CD4-positive, alpha-beta T cell (primary cell): ENCODE measurements at regions of chr15 and their contacts with region 1.

Region 1: DNA sequence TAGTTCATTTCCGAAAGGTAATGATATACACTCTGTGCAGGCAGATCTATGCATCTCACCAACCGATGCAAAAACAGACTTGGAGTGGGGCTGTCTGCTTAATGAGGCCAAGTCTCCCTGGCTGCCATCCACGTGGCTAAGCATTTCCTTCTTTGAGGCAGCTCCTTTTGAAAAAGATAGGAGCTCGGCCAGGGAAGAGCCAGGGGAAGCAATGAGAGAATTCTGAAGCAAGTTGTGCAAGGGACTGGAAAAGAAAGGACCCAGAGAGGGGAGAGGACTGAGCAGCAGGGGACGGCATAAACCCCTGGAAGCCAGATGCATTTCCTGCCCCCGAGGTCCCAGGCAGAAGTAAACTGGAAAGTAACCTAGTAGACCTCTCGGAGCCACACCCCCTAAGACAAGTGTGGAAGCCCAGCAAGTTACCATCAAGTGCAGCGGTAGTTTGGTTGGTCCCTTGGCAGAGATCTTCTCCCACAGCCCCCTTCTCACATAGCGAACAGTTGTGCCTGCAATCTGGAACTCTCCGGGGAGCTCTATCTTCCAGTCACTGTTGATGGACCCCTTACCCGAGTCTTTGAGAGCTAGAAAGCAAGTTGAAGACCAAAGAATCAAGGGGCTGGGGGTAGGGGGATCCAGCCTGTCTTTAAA is 288.2 kb downstream of the ADAMTS17 start:
- DNase-seq: no peak
- ATAC-seq: no peak
- H3K4me3 ChIP-seq: no peak overlapping the region
- H3K4me3 Mint-ChIP-seq: no peak overlapping the region
- H3K27ac ChIP-seq: no peak overlapping the region
- H3K27ac Mint-ChIP-seq: no peak overlapping the region
- H3K4me1 ChIP-seq: no peaks in the 10 kb centered on the region
- H3K4me1 Mint-ChIP-seq: no peaks in the 10 kb centered on the region
- H3K27me3 ChIP-seq: no peaks in the 10 kb centered on the region
- H3K27me3 Mint-ChIP-seq: no peaks in the 10 kb centered on the region
- CTCF ChIP-seq: no peak

Region 2: GRCh38 chr15:99931703-99932603 is 121.6 kb before region 1 on chr15:
- CTCF ChIA-PET with region 1: no interaction called
- POLR2A ChIA-PET with region 1: no interaction called
- intact Hi-C with region 1: no loop called
- DNase-seq: peak in 1 of 14 experiments; percentile 21
- ATAC-seq: no peak
- H3K4me3 ChIP-seq: no peak overlapping the region
- H3K4me3 Mint-ChIP-seq: no peak overlapping the region
- H3K27ac ChIP-seq: no peak overlapping the region
- H3K27ac Mint-ChIP-seq: no peak overlapping the region
- H3K4me1 ChIP-seq: peaks cover 13% of the 10 kb centered on the region
- H3K4me1 Mint-ChIP-seq: peaks cover 15% of the 10 kb centered on the region
- H3K27me3 ChIP-seq: no peaks in the 10 kb centered on the region
- H3K27me3 Mint-ChIP-seq: no peaks in the 10 kb centered on the region
- CTCF ChIP-seq: no peak

Region 3: GRCh38 chr15:100043015-100043641 is 10.5 kb before region 1 on chr15:
- CTCF ChIA-PET with region 1: no interaction called
- POLR2A ChIA-PET with region 1: no interaction called
- intact Hi-C with region 1: no loop called
- DNase-seq: no peak
- ATAC-seq: no peak
- H3K4me3 ChIP-seq: no peak overlapping the region
- H3K4me3 Mint-ChIP-seq: no peak overlapping the region
- H3K27ac ChIP-seq: no peak overlapping the region
- H3K27ac Mint-ChIP-seq: no peak overlapping the region
- H3K4me1 ChIP-seq: no peaks in the 10 kb centered on the region
- H3K4me1 Mint-ChIP-seq: no peaks in the 10 kb centered on the region
- H3K27me3 ChIP-seq: no peaks in the 10 kb centered on the region
- H3K27me3 Mint-ChIP-seq: no peaks in the 10 kb centered on the region
- CTCF ChIP-seq: no peak

Region 4: DNA sequence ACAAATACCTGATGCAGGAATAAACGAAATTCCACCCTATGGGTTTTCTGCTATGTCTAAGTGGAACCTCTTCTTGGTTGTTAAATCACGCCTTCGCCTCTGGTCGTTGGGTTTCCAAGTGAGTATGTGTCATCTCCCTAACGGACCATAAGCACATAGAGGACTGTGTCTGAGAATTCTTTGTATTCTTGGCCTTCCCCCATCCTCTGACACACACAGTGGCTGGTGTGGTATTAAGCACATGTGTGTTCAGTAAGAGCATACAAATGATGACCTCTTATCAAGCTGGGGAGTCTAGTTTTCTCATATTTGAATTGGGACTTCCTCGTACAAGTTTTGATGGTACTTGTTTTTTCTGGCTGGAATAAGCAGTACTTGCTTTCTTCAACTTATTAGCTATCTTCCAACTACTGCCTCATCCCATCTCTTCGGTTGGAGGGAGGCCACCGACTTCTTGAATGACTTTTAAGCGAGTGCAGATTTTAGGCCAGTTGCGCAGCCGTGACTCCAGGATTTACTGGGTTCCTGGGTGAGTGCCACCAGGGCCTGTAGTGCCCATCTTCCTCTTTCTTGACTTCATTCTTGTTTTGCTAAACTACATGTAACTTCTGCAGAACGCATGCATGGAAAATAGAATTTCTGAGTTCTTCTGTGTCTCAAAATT is 48.0 kb after region 1 on chr15:
- CTCF ChIA-PET with region 1: no interaction called
- POLR2A ChIA-PET with region 1: no interaction called
- intact Hi-C with region 1: loop called in 1 of 2 experiments (anchors 10 kb)
- DNase-seq: no peak
- ATAC-seq: no peak
- H3K4me3 ChIP-seq: no peak overlapping the region
- H3K4me3 Mint-ChIP-seq: no peak overlapping the region
- H3K27ac ChIP-seq: no peak overlapping the region
- H3K27ac Mint-ChIP-seq: no peak overlapping the region
- H3K4me1 ChIP-seq: no peaks in the 10 kb centered on the region
- H3K4me1 Mint-ChIP-seq: no peaks in the 10 kb centered on the region
- H3K27me3 ChIP-seq: no peaks in the 10 kb centered on the region
- H3K27me3 Mint-ChIP-seq: no peaks in the 10 kb centered on the region
- CTCF ChIP-seq: no peak

Region 5: GRCh38 chr15:100290919-100291495 is 237.4 kb after region 1 on chr15:
- CTCF ChIA-PET with region 1: no interaction called
- POLR2A ChIA-PET with region 1: no interaction called
- intact Hi-C with region 1: no loop called
- DNase-seq: peak in 1 of 14 experiments; percentile 1
- ATAC-seq: no peak
- H3K4me3 ChIP-seq: no peak overlapping the region
- H3K4me3 Mint-ChIP-seq: no peak overlapping the region
- H3K27ac ChIP-seq: no peak overlapping the region
- H3K27ac Mint-ChIP-seq: no peak overlapping the region
- H3K4me1 ChIP-seq: no peaks in the 10 kb centered on the region
- H3K4me1 Mint-ChIP-seq: peaks cover 10% of the 10 kb centered on the region
- H3K27me3 ChIP-seq: no peaks in the 10 kb centered on the region
- H3K27me3 Mint-ChIP-seq: no peaks in the 10 kb centered on the region
- CTCF ChIP-seq: no peak

Region 6: GRCh38 chr15:100602064-100602822 is 548.6 kb after region 1 on chr15 and contains the starts of genes ASB7 and LINS1:
- CTCF ChIA-PET with region 1: no interaction called
- POLR2A ChIA-PET with region 1: no interaction called
- intact Hi-C with region 1: no loop called
- DNase-seq: peak; percentile 99 to 100 (median 100)
- ATAC-seq: peak; percentile 89
- H3K4me3 ChIP-seq: peak within 1 kb of the TSS; percentile 96
- H3K4me3 Mint-ChIP-seq: peak within 1 kb of the TSS; percentile 96
- H3K27ac ChIP-seq: peak within 1 kb of the TSS; percentile 84 to 94
- H3K27ac Mint-ChIP-seq: peak within 1 kb of the TSS; percentile 87
- H3K4me1 ChIP-seq: peaks cover 44% of the 10 kb centered on the region
- H3K4me1 Mint-ChIP-seq: peaks cover 62% of the 10 kb centered on the region
- H3K27me3 ChIP-seq: no peaks in the 10 kb centered on the region
- H3K27me3 Mint-ChIP-seq: no peaks in the 10 kb centered on the region
- CTCF ChIP-seq: no peak
- total RNA-seq, gene ASB7: 14.9 to 16.7 TPM
- total RNA-seq, gene LINS1: 38.9 to 39.6 TPM